Natural killer cell (primary cell): ENCODE measurements at regions of chr11 and their contacts with region 1.

Region 1: GRCh38 chr11:60615497-60615896 is 83.9 kb upstream of the MS4A8 start:
- DNase-seq: no peak
- ATAC-seq: no peak
- H3K4me3 ChIP-seq: no peak overlapping the region
- H3K4me3 Mint-ChIP-seq: no peak overlapping the region
- H3K27ac ChIP-seq: no peak overlapping the region
- H3K27ac Mint-ChIP-seq: no peak overlapping the region
- H3K4me1 ChIP-seq: no peaks in the 10 kb centered on the region
- H3K4me1 Mint-ChIP-seq: no peaks in the 10 kb centered on the region
- H3K27me3 ChIP-seq: no peaks in the 10 kb centered on the region
- H3K27me3 Mint-ChIP-seq: peaks cover 0 to 15% of the 10 kb centered on the region in 2 donors
- CTCF ChIP-seq: no peak

Region 2: DNA sequence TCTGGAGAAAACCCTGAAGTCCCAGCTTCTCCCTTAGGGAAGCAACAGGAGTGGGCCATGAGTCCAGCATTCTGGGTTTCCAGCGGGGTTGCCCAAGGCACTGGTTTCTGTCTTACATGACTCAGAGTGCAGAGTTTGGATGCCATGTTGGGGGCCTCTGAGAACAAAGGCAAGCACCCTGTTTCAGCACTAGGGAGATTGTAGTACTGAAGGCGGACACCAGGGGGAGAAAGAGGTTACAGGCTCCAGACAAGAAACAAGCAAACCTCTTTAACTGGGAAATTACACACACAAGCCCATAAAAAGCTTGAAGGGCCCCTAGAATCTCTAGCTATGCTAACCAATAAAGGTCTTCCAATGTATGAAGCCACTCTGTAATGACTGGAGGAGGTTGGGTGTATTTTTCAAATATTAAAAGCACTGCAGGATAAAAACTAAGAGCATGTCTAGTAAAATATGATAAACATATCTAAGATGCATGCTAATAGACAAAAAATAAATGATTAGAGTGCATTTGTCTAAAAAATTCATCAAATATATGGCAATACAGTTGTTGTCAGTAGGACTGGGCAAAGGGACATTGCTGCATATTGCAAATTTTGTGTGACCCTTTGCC is 281.4 kb before region 1 on chr11:
- intact Hi-C with region 1: loop called (anchors 5 kb)
- DNase-seq: peak; percentile 41 to 73
- ATAC-seq: peak in 2 of 3 donors; percentile 55 to 71
- H3K4me3 ChIP-seq: no peak overlapping the region
- H3K4me3 Mint-ChIP-seq: no peak overlapping the region
- H3K27ac ChIP-seq: no peak overlapping the region
- H3K27ac Mint-ChIP-seq: no peak overlapping the region
- H3K4me1 ChIP-seq: no peaks in the 10 kb centered on the region
- H3K4me1 Mint-ChIP-seq: no peaks in the 10 kb centered on the region
- H3K27me3 ChIP-seq: no peaks in the 10 kb centered on the region
- H3K27me3 Mint-ChIP-seq: peaks cover 3 to 11% of the 10 kb centered on the region in 2 donors
- CTCF ChIP-seq: peak; percentile 82

Region 3: DNA sequence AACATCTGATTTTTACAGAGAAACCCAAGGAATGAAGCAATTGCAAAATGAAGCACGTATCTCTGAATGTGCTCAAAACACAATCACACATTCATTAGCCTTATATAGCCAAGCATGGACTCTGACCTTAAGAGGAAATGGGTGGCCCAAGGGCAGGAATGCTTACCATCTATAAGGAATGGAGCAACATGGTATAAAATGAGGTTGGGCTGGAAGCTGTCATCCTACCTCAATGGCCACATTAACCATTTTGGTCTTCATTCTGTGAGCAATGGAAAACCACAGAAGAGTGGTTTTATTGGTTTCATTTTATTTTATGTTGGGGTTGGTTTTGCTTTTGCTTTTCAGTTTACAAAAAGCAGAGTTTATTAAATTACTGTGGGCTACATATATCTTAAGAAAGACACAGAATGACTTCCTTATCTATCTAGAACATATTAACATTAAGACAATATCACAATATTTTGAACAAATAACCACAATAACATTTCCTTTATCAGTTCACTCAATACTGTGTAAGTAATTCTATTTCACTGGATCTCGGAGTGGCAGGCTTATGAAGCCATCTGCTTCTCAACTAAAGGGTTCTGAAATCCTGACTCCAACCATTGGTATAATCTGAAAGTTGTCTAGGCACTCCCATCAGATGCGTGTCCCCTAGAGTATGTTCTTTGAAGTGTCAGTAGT is 111.1 kb before region 1 on chr11:
- intact Hi-C with region 1: no loop called
- DNase-seq: peak in 1 of 2 donors; percentile 15
- ATAC-seq: peak in 2 of 3 donors; percentile 29 to 53
- H3K4me3 ChIP-seq: no peak overlapping the region
- H3K4me3 Mint-ChIP-seq: peak overlapping the region; percentile 32
- H3K27ac ChIP-seq: no peak overlapping the region
- H3K27ac Mint-ChIP-seq: peak overlapping the region in 1 of 2 donors; percentile 5
- H3K4me1 ChIP-seq: no peaks in the 10 kb centered on the region
- H3K4me1 Mint-ChIP-seq: peaks cover 17 to 19% of the 10 kb centered on the region in 2 donors
- H3K27me3 ChIP-seq: peaks cover 7% of the 10 kb centered on the region
- H3K27me3 Mint-ChIP-seq: peaks cover 43 to 66% of the 10 kb centered on the region in 2 donors
- CTCF ChIP-seq: no peak

Region 4: DNA sequence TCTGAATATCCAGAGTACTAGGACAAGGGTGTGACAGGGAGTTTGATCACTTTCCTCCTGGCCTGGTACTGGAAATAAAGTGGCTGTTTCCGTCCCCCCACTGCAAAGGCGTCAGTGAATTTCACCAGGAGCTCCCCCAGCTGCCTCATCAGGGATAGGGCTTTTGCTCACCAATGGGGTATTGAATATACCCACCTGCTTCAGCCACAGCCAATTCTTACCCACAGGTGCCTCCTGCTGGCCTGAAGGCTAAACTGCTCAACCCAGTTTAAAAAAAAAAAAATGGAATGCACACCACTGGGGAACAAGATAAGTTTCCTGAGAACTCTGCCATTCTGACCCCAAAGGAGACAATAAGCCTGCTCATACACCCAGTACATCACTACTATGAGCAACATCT is 18.6 kb after region 1 on chr11:
- intact Hi-C with region 1: no loop called
- DNase-seq: no peak
- ATAC-seq: no peak
- H3K4me3 ChIP-seq: no peak overlapping the region
- H3K4me3 Mint-ChIP-seq: no peak overlapping the region
- H3K27ac ChIP-seq: no peak overlapping the region
- H3K27ac Mint-ChIP-seq: no peak overlapping the region
- H3K4me1 ChIP-seq: peaks cover 10% of the 10 kb centered on the region
- H3K4me1 Mint-ChIP-seq: no peaks in the 10 kb centered on the region
- H3K27me3 ChIP-seq: no peaks in the 10 kb centered on the region
- H3K27me3 Mint-ChIP-seq: peaks cover 5 to 12% of the 10 kb centered on the region in 2 donors
- CTCF ChIP-seq: no peak